SK-N-SH (cell line): ENCODE measurements at regions of chr7 and their contacts with region 1.

Region 1: GRCh38 chr7:79176859-79177477 is 276.5 kb downstream of the MAGI2 start:
- DNase-seq: peak; percentile 23
- H3K4me3 ChIP-seq: no peak overlapping the region
- H3K27ac ChIP-seq: no peak overlapping the region
- H3K4me1 ChIP-seq: no peaks in the 10 kb centered on the region; a peak in 1 of 4 replicates
- H3K27me3 ChIP-seq: no peaks in the 10 kb centered on the region
- CTCF ChIP-seq: peak; percentile 92
- EP300 ChIP-seq: no peak
- RAD21 ChIP-seq: peak; percentile 92

Region 2: DNA sequence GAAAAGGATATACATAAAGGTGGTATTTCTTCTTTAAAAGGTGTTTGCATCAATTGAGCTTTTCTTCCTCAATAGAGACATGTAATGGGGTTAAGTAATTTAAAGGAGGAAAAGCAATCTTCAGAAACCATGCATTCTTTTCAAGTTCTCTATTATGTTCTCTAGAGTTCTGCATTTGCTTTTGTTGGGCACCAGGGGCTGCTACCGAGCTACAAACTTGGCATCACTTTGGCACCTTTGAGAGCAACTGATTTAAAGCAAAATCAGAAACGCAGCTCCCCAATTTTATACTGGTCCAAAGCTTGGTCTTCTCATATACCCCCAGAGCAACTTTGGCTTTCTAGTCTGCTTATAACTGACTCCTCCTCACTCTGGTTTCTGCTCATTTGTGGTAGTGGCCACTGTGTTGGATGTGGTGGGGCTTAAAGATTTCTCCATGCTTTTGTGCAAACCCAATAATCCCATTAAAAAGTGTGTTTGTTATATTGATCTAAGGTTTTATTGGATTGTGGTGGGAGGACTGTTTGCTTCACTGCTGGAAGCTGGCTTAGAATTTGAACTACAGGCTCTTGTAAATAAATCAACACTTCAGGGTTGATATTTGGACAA is 666.3 kb before region 1 on chr7:
- CTCF ChIA-PET with region 1: interaction called, 16 read pairs
- POLR2A ChIA-PET with region 1: no interaction called
- DNase-seq: peak; percentile 57
- H3K4me3 ChIP-seq: no peak overlapping the region
- H3K27ac ChIP-seq: no peak overlapping the region
- H3K4me1 ChIP-seq: no peaks in the 10 kb centered on the region; a peak in 1 of 4 replicates
- H3K27me3 ChIP-seq: no peaks in the 10 kb centered on the region
- CTCF ChIP-seq: peak; percentile 95
- EP300 ChIP-seq: no peak
- RAD21 ChIP-seq: peak; percentile 91

Region 3: GRCh38 chr7:78587443-78588044 is 589.4 kb before region 1 on chr7:
- CTCF ChIA-PET with region 1: interaction called, 11 read pairs
- POLR2A ChIA-PET with region 1: no interaction called
- DNase-seq: peak; percentile 47
- H3K4me3 ChIP-seq: no peak overlapping the region
- H3K27ac ChIP-seq: no peak overlapping the region
- H3K4me1 ChIP-seq: no peaks in the 10 kb centered on the region; a peak in 1 of 4 replicates
- H3K27me3 ChIP-seq: no peaks in the 10 kb centered on the region
- CTCF ChIP-seq: peak; percentile 97
- EP300 ChIP-seq: no peak
- RAD21 ChIP-seq: peak; percentile 94

Region 4: DNA sequence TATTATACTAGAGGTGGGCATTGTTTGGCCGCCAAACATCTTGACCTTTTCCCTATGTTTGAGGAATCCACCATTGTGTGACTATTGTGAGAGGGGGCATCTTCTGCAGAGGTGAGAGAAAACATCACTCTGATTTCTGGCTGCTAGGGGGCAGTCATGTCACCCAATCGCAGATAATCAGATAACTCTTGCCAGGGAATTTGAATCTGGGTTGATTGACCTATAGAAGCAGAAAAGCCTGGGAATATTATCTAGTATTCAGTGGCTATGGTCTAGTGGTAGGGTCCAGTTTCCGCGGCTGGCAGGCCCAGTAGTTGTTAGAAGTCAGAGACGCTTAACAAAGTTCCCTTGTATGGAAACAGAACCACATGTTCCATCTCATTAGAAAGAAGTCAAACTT is 569.9 kb before region 1 on chr7:
- CTCF ChIA-PET with region 1: interaction called, 10 read pairs
- POLR2A ChIA-PET with region 1: no interaction called
- DNase-seq: no peak
- H3K4me3 ChIP-seq: no peak overlapping the region
- H3K27ac ChIP-seq: no peak overlapping the region
- H3K4me1 ChIP-seq: peaks cover 0 to 4% of the 10 kb centered on the region in 2 experiments; a peak in 2 of 4 replicates
- H3K27me3 ChIP-seq: no peaks in the 10 kb centered on the region
- CTCF ChIP-seq: peak; percentile 53
- EP300 ChIP-seq: no peak
- RAD21 ChIP-seq: peak; percentile 41

Region 5: DNA sequence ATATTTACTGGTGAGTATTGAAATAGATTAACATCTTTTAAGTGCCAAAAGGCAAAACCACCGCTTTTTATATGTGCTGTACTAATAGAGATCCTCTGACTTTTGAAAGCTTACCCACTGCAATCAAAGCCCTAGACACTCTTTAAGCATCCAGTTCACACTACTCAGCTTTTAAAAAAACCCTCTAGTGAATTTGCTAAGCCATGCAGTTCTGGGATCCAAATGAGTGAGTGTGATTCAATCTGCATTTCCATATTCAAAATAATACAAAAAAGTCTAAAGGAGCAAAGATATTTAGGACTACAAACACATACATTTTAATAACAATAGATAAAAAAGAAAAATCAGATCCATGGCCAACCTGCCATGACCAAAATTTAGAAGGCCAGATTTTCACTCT is 11.7 kb before region 1 on chr7:
- CTCF ChIA-PET with region 1: interaction called, 24 read pairs
- POLR2A ChIA-PET with region 1: no interaction called
- DNase-seq: no peak
- H3K4me3 ChIP-seq: no peak overlapping the region
- H3K27ac ChIP-seq: no peak overlapping the region
- H3K4me1 ChIP-seq: no peaks in the 10 kb centered on the region
- H3K27me3 ChIP-seq: no peaks in the 10 kb centered on the region
- CTCF ChIP-seq: no peak
- EP300 ChIP-seq: no peak
- RAD21 ChIP-seq: no peak

Region 6: GRCh38 chr7:79337717-79338116 is 160.7 kb after region 1 on chr7:
- CTCF ChIA-PET with region 1: no interaction called
- POLR2A ChIA-PET with region 1: no interaction called
- DNase-seq: no peak
- H3K4me3 ChIP-seq: no peak overlapping the region
- H3K27ac ChIP-seq: no peak overlapping the region
- H3K4me1 ChIP-seq: peaks cover 0 to 14% of the 10 kb centered on the region in 2 experiments; a peak in 2 of 4 replicates
- H3K27me3 ChIP-seq: no peaks in the 10 kb centered on the region
- CTCF ChIP-seq: no peak
- EP300 ChIP-seq: no peak
- RAD21 ChIP-seq: no peak